ENCODE measurements at regions of chr7 and their contacts with region 1.

Region 1: GRCh38 chr7:92691578-92691977 is 101.4 kb upstream of the FAM133B start:
- DNase-seq: peak; percentile 54
- H3K4me3 ChIP-seq: no peak overlapping the region
- H3K27ac ChIP-seq: no peak overlapping the region
- H3K4me1 ChIP-seq: peaks cover 14% of the 10 kb centered on the region
- H3K27me3 ChIP-seq: no peaks in the 10 kb centered on the region
- CTCF ChIP-seq: peak; percentile 48 to 63

Region 2: GRCh38 chr7:92751902-92752901 is 60.6 kb after region 1 on chr7:
- CTCF ChIA-PET with region 1: no interaction called
- dilution Hi-C with region 1: no loop called
- in situ Hi-C with region 1: no loop called
- intact Hi-C with region 1: loop called (anchors 5 kb)
- DNase-seq: peak; percentile 94
- H3K4me3 ChIP-seq: peak overlapping the region in 1 of 3 experiments; percentile 19
- H3K27ac ChIP-seq: peak overlapping the region; percentile 88
- H3K4me1 ChIP-seq: peaks cover 65% of the 10 kb centered on the region
- H3K27me3 ChIP-seq: no peaks in the 10 kb centered on the region
- CTCF ChIP-seq: no peak

Region 3: DNA sequence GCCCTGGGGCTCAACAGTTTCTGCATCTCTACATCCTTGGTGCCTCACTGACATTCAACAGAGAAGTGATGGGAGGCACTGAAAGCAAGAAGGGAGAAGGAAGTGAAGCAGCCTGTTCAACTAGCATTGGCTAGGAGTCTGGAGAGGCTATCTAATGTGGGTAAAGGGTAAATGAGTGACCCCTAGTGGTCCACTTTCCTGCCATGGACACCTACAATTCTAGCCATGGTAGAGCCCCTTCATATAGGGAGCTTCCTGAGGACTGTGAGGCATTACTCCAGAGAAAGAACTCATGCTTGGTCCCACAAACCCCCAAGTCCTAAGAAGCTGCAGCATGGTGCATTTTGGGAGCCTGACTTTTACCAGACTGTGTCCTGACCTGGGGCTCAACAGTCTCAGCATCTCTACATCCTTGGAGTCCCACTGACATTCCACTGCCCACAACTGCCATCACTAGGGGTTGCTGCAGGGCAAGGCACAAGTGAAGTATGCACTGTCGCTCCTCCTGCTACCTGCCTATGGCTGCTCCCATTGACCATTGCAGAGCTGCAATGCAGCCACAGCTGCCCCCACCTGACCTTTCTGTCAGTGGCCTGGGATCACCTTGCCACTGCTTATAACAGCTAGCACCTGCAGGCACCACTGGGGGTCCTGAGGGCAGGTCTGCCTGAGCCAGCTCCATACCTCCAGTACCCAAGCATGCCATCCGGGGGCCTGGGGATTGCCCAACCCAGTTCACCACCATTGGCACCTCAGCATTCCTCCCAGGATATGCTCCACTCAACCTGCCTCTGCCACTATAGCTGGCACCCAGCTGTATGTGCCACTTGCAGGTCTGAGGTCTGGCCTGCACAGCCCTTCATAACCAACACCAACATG is 188.9 kb after region 1 on chr7:
- CTCF ChIA-PET with region 1: no interaction called
- dilution Hi-C with region 1: no loop called
- in situ Hi-C with region 1: no loop called
- intact Hi-C with region 1: loop called (anchors 5 kb)
- DNase-seq: peak; percentile 18
- H3K4me3 ChIP-seq: no peak overlapping the region
- H3K27ac ChIP-seq: no peak overlapping the region
- H3K4me1 ChIP-seq: peaks cover 9% of the 10 kb centered on the region
- H3K27me3 ChIP-seq: no peaks in the 10 kb centered on the region
- CTCF ChIP-seq: peak in 1 of 2 donors; percentile 14

Region 4: GRCh38 chr7:92988051-92988450 is 296.5 kb after region 1 on chr7:
- CTCF ChIA-PET with region 1: no interaction called
- dilution Hi-C with region 1: no loop called
- in situ Hi-C with region 1: no loop called
- intact Hi-C with region 1: loop called (anchors 1 kb)
- DNase-seq: peak; percentile 74
- H3K4me3 ChIP-seq: no peak overlapping the region
- H3K27ac ChIP-seq: peak overlapping the region; percentile 43
- H3K4me1 ChIP-seq: peaks cover 15% of the 10 kb centered on the region
- H3K27me3 ChIP-seq: no peaks in the 10 kb centered on the region
- CTCF ChIP-seq: peak; percentile 55 to 67

Region 5: GRCh38 chr7:93055543-93056107 is 364.0 kb after region 1 on chr7:
- CTCF ChIA-PET with region 1: no interaction called
- dilution Hi-C with region 1: no loop called
- in situ Hi-C with region 1: loop called in 1 of 2 experiments (anchors 10 kb)
- intact Hi-C with region 1: loop called (anchors 1 kb)
- DNase-seq: peak; percentile 24
- H3K4me3 ChIP-seq: no peak overlapping the region
- H3K27ac ChIP-seq: no peak overlapping the region
- H3K4me1 ChIP-seq: no peaks in the 10 kb centered on the region
- H3K27me3 ChIP-seq: no peaks in the 10 kb centered on the region
- CTCF ChIP-seq: peak; percentile 61 to 81